Transverse colon (tissue), 4 donors: ENCODE measurements at regions of chr17 and their contacts with region 1.

Region 1: DNA sequence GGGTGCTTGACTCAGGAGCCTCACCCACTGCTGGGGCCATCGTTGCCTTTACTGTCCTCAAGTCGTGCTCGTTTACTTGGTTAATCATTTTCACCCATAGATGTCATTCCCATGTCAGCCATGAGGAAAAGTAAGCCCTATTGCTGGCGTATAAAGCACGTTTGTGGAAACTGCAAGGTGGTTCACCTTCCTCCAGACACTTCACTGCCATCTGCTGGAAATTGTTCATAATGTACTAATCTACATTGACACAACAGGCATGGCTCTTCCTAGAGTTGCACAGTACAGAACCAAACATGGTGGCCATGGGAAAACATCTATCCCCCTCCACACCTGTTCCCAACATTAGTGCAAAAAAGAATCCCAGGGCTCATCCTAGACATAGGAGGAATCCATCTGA is 116.6 kb downstream of the ZNF18 start:
- DNase-seq: peak; percentile 14
- H3K4me3 ChIP-seq: no peak overlapping the region
- H3K27ac ChIP-seq: no peak overlapping the region
- H3K4me1 ChIP-seq: peaks cover 0 to 4% (median 0%) of the 10 kb centered on the region in 4 donors
- H3K27me3 ChIP-seq: no peaks in the 10 kb centered on the region
- CTCF ChIP-seq: peak; percentile 28 to 82 (median 45)
- EP300 ChIP-seq: no peak
- POLR2A ChIP-seq: no peak

Region 2: DNA sequence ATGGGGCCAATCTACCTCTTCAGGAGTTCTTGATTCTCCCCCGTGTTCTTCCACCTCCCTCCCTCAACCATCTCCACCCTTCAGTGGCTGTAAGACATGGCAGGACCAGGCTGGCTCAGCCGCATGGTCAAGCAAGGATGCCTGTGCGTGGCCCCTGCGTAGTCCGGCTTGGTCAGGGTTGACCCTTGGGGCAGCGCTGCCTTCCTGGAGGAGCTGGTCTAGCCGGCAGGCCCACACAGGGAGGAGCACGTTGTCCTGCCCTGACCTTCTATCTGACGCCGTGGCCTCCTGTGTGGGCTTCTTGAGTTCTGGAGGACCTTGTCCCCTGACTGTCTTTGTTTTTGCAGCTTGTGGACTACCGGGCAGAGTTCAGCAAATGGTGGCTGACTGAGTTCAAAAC is 112.6 kb before region 1 on chr17:
- in situ Hi-C with region 1: loop called in 1 of 4 experiments (anchors 25 kb)
- intact Hi-C with region 1: no loop called
- DNase-seq: no peak
- H3K4me3 ChIP-seq: no peak overlapping the region
- H3K27ac ChIP-seq: no peak overlapping the region
- H3K4me1 ChIP-seq: no peaks in the 10 kb centered on the region
- H3K27me3 ChIP-seq: no peaks in the 10 kb centered on the region
- CTCF ChIP-seq: no peak
- EP300 ChIP-seq: no peak
- POLR2A ChIP-seq: no peak

Region 3: GRCh38 chr17:11997147-11997846 is 116.6 kb after region 1 on chr17 and contains the start of gene ZNF18:
- in situ Hi-C with region 1: loop called in 1 of 4 experiments (anchors 25 kb)
- intact Hi-C with region 1: no loop called
- DNase-seq: peak; percentile 98
- H3K4me3 ChIP-seq: peak within 1 kb of the TSS; percentile 51 to 87 (median 83)
- H3K27ac ChIP-seq: peak within 1 kb of the TSS; percentile 90 to 98 (median 96)
- H3K4me1 ChIP-seq: peaks cover 4 to 14% (median 11%) of the 10 kb centered on the region in 4 donors
- H3K27me3 ChIP-seq: no peaks in the 10 kb centered on the region
- CTCF ChIP-seq: no peak
- EP300 ChIP-seq: no peak
- POLR2A ChIP-seq: peak; percentile 95
- total RNA-seq, gene ZNF18: 2.2 to 15.5 (median 7.9) TPM